Tibial artery (tissue), 4 donors: ENCODE measurements at regions of chr9 and their contacts with region 1.

Region 1: GRCh38 chr9:129177791-129178559 is at the start of gene IER5L:
- DNase-seq: peak; percentile 96 to 98
- H3K4me3 ChIP-seq: peak within 1 kb of the TSS; percentile 99 to 100
- H3K27ac ChIP-seq: peak within 1 kb of the TSS; percentile 99 to 100
- H3K4me1 ChIP-seq: peaks cover 4 to 27% (median 21%) of the 10 kb centered on the region in 4 donors
- H3K27me3 ChIP-seq: no peaks in the 10 kb centered on the region
- CTCF ChIP-seq: no peak

Region 2: GRCh38 chr9:128881901-128882681 is 295.9 kb before region 1 on chr9 and contains the starts of genes KYAT1 and LRRC8A:
- intact Hi-C with region 1: no loop called
- DNase-seq: peak; percentile 98 to 99
- H3K4me3 ChIP-seq: peak within 1 kb of the TSS; percentile 84 to 96
- H3K27ac ChIP-seq: peak within 1 kb of the TSS; percentile 94 to 98
- H3K4me1 ChIP-seq: peaks cover 7 to 79% (median 65%) of the 10 kb centered on the region in 4 donors
- H3K27me3 ChIP-seq: no peaks in the 10 kb centered on the region
- CTCF ChIP-seq: peak in 1 of 2 experiments; percentile 10

Region 3: DNA sequence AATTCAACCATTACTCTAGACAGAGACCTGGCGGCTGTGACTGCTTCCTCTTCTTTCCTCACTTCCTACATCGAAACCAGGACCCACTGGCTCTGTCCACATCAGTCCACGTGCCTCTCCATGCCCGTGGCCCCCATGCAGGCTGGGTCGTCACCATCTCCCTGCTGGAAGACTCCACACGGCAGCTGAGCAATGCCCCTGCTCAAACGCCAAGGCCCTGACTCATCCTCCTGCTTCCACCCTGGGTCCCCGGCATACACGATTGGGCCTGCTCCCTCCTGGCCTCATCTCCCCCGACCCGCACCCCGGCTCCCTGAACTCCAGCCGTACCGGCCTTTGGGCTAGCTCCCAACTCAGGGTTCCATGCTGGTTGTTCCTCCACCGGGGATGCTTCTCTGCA is 67.3 kb after region 1 on chr9:
- intact Hi-C with region 1: loop called (anchors 5 kb)
- DNase-seq: peak in 1 of 2 donors; percentile 10
- H3K4me3 ChIP-seq: no peak overlapping the region
- H3K27ac ChIP-seq: no peak overlapping the region
- H3K4me1 ChIP-seq: no peaks in the 10 kb centered on the region
- H3K27me3 ChIP-seq: no peaks in the 10 kb centered on the region
- CTCF ChIP-seq: no peak

Region 4: GRCh38 chr9:129333953-129334724 is 156.2 kb after region 1 on chr9:
- intact Hi-C with region 1: loop called (anchors 5 kb)
- DNase-seq: peak; percentile 93 to 96
- H3K4me3 ChIP-seq: peak overlapping the region in 1 of 2 donors; percentile 28
- H3K27ac ChIP-seq: peak overlapping the region; percentile 87 to 92
- H3K4me1 ChIP-seq: peaks cover 16 to 83% (median 55%) of the 10 kb centered on the region in 4 donors
- H3K27me3 ChIP-seq: no peaks in the 10 kb centered on the region
- CTCF ChIP-seq: peak in 1 of 2 experiments; percentile 15

Region 5: DNA sequence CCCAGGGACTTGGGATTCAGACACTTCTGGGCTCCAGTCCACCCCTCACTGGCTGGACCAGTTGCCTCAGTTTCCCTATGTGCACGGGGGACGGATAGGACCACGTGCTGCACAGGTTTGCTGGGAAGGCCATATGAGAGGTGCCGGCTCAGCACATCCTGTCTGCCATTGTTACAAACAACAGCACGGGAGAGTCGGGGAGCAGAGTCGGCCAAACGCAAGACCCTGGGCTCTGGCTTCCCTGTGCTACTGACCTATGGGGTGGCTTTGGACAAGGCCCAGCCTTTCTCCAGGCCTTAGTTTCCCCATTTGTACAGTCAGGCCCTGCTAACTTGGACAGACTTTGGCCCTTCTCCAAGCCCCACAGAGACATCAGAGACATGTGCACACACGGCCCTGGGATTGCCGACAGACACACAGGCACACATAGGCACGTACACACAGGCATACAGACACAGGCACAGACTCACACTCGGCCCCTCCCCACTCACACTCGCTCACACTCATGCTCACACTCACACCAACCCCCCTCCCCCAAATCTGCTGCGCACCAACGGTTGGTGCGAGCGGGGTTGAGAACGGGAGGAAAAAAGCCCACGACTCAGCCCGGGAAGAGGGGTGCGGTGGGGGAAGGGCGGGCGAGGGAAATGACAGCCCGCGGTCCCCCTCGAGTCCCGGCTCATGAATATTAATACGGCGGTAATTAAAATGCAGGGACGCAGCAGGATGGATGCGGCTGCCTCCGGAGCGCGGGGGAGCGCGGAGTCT is 309.9 kb after region 1 on chr9:
- intact Hi-C with region 1: loop called (anchors 5 kb)
- DNase-seq: peak; percentile 80 to 88
- H3K4me3 ChIP-seq: peak overlapping the region; percentile 53 to 64
- H3K27ac ChIP-seq: peak overlapping the region; percentile 100
- H3K4me1 ChIP-seq: peaks cover 0 to 97% (median 84%) of the 10 kb centered on the region in 4 donors
- H3K27me3 ChIP-seq: no peaks in the 10 kb centered on the region
- CTCF ChIP-seq: no peak